CD8-positive, alpha-beta memory T cell (primary cell): ENCODE measurements at regions of chr9 and their contacts with region 1.

Region 1: DNA sequence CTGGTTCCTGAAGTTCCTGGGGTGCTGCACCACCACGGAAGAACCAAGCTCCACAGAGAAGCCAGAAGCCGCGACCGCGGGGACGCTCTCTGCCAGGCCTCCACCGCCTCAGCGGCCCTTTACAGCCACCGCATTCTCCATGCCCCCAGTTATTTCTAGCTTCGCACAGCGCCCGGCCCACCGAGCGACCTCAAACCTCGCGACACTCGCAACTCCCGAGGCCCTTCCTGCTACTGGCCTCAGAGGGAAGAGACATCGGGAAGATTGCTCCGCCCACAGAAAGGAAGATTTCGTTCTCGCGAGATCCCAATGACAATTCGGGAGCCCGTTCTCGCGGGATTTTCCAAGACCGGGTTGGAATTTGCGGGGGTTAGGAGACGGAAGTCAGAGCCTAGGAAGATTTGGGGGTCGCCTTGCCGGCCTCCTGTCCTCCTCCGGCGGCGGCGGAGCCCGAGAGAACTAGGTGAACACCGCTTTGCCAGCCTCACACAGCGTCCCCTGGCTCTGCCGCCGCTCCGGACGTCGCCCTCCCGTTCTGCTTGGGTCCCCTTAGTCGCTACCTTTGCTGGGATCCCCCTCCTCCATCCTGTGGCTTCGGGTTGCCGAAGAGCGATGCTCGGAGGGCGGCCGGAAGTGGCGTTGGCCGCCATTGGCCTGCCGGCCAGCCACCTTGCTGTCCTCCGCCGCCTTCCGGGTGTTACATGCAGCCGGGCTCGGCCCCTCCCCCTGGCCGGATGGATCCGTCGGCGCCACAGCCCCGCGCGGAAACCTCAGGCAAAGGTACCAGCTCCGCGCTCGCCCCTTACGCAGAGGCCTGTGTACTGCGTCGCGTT is at the start of gene ERCC6L2:
- DNase-seq: peak; percentile 88 to 95 (median 91)
- H3K4me3 ChIP-seq: no peak within 1 kb of the TSS
- H3K4me3 Mint-ChIP-seq: no peak within 1 kb of the TSS
- H3K27ac ChIP-seq: no peak within 1 kb of the TSS
- H3K27ac Mint-ChIP-seq: no peak within 1 kb of the TSS
- H3K4me1 ChIP-seq: peaks cover 22% of the 10 kb centered on the region
- H3K4me1 Mint-ChIP-seq: peaks cover 31 to 40% (median 39%) of the 10 kb centered on the region in 3 donors
- H3K27me3 ChIP-seq: no peaks in the 10 kb centered on the region
- H3K27me3 Mint-ChIP-seq: no peaks in the 10 kb centered on the region
- total RNA-seq, gene ERCC6L2: 30.0 to 32.7 TPM

Region 2: GRCh38 chr9:95840074-95840473 is 35.4 kb before region 1 on chr9:
- CTCF ChIA-PET with region 1: no interaction called
- POLR2A ChIA-PET with region 1: interaction called, 11 read pairs
- DNase-seq: no peak
- H3K4me3 ChIP-seq: no peak overlapping the region
- H3K4me3 Mint-ChIP-seq: no peak overlapping the region
- H3K27ac ChIP-seq: no peak overlapping the region
- H3K27ac Mint-ChIP-seq: no peak overlapping the region
- H3K4me1 ChIP-seq: no peaks in the 10 kb centered on the region
- H3K4me1 Mint-ChIP-seq: no peaks in the 10 kb centered on the region
- H3K27me3 ChIP-seq: no peaks in the 10 kb centered on the region
- H3K27me3 Mint-ChIP-seq: no peaks in the 10 kb centered on the region

Region 3: DNA sequence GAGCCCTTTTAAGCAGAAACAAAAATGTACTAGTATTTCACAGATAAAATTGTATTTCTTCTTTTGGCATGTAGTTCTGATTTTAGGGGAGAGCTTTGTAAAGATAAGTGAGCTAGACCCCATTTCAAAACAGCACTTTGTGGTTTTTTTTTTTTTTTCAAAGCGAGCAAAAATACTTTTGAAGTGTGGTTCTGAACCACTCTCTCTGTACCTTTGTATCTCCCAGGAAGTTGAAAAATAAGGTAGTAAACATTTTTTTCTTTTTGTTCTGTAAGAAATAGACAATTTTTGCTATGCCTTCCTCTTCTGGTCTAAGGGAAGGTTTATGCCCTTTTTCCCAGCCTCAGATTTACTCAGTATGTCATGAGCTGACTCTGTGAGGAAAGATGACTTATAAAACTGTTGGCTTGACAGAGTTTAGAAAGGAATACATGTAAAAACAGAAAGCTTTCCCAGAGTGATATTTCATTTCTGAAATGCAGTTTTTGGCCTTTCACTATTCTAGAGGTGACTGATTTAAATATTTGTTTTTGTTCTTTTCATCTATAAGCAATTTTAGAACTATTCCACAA is 12.5 kb after region 1 on chr9:
- CTCF ChIA-PET with region 1: interaction called, 30 read pairs
- POLR2A ChIA-PET with region 1: interaction called, 13 read pairs
- DNase-seq: peak in 2 of 5 donors; percentile 20 to 70
- H3K4me3 ChIP-seq: peak overlapping the region; percentile 24
- H3K4me3 Mint-ChIP-seq: peak overlapping the region; percentile 53 to 86 (median 74)
- H3K27ac ChIP-seq: no peak overlapping the region
- H3K27ac Mint-ChIP-seq: peak overlapping the region; percentile 47 to 96 (median 78)
- H3K4me1 ChIP-seq: peaks cover 69% of the 10 kb centered on the region
- H3K4me1 Mint-ChIP-seq: peaks cover 56 to 85% (median 82%) of the 10 kb centered on the region in 3 donors
- H3K27me3 ChIP-seq: no peaks in the 10 kb centered on the region
- H3K27me3 Mint-ChIP-seq: no peaks in the 10 kb centered on the region